ENCODE measurements at regions of chr2 and their contacts with region 1.

Region 1: GRCh38 chr2:206521612-206522011 is 78.3 kb downstream of the ADAM23 start:
- DNase-seq: no peak
- ATAC-seq: no peak
- H3K4me3 ChIP-seq: no peak overlapping the region
- H3K27ac ChIP-seq: no peak overlapping the region
- H3K4me1 ChIP-seq: peaks cover 0 to 7% (median 0%) of the 10 kb centered on the region in 12 donors
- H3K27me3 ChIP-seq: no peaks in the 10 kb centered on the region
- CTCF ChIP-seq: no peak
- POLR2A ChIP-seq: no peak

Region 2: GRCh38 chr2:206442833-206443734 is 78.5 kb before region 1 on chr2 and contains the start of gene ADAM23:
- intact Hi-C with region 1: loop called in 4 of 10 experiments (anchors 5 to 10 kb)
- DNase-seq: peak; percentile 48 to 76 (median 66)
- ATAC-seq: peak; percentile 73 to 89 (median 88)
- H3K4me3 ChIP-seq: peak within 1 kb of the TSS; percentile 41 to 90 (median 64)
- H3K27ac ChIP-seq: peak within 1 kb of the TSS; percentile 4 to 86 (median 75)
- H3K4me1 ChIP-seq: peaks cover 0 to 37% (median 7%) of the 10 kb centered on the region in 12 donors
- H3K27me3 ChIP-seq: peaks cover 0 to 45% (median 8%) of the 10 kb centered on the region in 9 donors
- CTCF ChIP-seq: peak in 6 of 12 donors; percentile 8 to 53 (median 38)
- POLR2A ChIP-seq: peak in 1 of 2 donors; percentile 54
- total RNA-seq, gene ADAM23: 36.0 to 87.4 (median 71.3) TPM

Region 3: GRCh38 chr2:206462240-206462854 is 59.3 kb before region 1 on chr2:
- intact Hi-C with region 1: loop called in 1 of 10 experiments (anchors 10 kb)
- DNase-seq: no peak
- ATAC-seq: peak in 1 of 4 donors; percentile 56
- H3K4me3 ChIP-seq: peak overlapping the region in 4 of 12 donors; percentile 0 to 23 (median 5)
- H3K27ac ChIP-seq: peak overlapping the region; percentile 6 to 86 (median 66)
- H3K4me1 ChIP-seq: peaks cover 0 to 34% (median 2%) of the 10 kb centered on the region in 12 donors
- H3K27me3 ChIP-seq: no peaks in the 10 kb centered on the region
- CTCF ChIP-seq: no peak
- POLR2A ChIP-seq: no peak

Region 4: DNA sequence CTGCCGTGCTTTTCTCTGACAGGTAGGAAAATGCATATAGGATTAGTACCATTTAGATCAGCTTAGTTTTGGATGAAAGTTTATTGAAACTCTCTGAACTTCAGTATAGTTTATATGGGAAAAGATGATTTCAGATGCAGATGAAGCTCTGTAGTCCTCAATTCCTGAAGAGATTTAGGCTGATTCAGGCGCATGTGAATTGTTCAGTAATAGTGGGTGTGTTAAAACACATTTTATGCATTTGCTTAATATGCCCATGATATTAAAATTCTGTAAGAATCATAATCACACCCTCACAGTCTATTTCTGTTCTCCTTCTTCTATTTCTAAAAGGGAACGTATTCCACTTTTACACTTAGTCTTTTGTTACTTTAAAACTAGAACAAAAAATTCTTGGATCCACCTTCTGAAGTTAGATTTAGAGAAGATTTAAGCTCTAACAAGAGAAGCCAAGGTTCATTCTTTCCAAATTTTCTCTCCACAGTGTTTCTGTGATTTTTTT is 76.2 kb after region 1 on chr2:
- intact Hi-C with region 1: no loop called
- DNase-seq: no peak
- ATAC-seq: no peak
- H3K4me3 ChIP-seq: no peak overlapping the region
- H3K27ac ChIP-seq: no peak overlapping the region
- H3K4me1 ChIP-seq: no peaks in the 10 kb centered on the region
- H3K27me3 ChIP-seq: no peaks in the 10 kb centered on the region
- CTCF ChIP-seq: no peak
- POLR2A ChIP-seq: no peak

Measured in heart left ventricle (tissue), 16 donors.